GM12878 (cell line): ENCODE measurements at regions of chr17 and their contacts with region 1.

Region 1: DNA sequence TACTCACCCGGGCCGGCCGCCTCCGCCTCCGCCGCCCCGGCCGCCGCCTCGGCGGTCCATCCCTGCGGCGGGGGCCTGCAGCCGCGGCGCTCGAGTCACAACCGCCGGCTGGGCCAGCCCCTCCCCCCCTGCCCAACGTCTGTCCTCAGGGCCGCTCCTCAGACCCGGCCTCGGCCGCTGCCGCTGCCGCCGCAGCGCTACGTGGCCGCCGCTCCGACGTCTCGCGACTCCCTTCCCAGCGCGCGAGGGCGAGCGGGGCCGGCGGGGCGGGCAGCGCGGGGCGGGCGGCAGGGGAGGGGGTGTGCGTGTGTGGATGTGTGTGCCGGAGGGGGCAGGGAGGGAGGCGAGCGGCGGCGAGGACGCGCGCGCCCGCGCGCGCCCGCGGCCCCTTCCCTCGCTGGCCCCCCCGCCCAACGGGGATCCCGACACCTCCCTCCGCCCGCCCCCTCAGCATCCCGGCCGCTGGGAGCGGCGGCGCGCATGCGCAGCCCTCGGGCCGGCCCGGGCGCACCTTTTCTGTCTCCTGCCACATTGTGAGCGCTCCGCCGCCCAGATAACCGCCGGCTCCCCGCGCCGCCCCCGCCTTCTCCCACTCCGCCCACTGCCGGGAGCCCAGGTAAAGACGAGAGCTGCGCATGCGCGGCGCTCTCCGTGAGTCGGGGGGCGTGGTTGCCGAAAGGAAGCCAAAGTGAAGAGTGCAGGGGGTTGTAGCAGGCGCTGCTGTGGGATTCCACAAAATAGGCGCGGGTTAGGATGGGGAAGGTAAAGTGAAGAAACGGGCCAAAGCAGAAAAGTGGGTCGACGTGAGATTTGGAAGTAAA is at the start of gene ZNF652:
- DNase-seq: peak; percentile 65
- ATAC-seq: peak; percentile 69
- H3K4me3 ChIP-seq: peak within 1 kb of the TSS; percentile 95
- H3K27ac ChIP-seq: peak within 1 kb of the TSS; percentile 81
- H3K4me1 ChIP-seq: peaks cover 20% of the 10 kb centered on the region
- H3K27me3 ChIP-seq: no peaks in the 10 kb centered on the region
- CTCF ChIP-seq: no peak
- EP300 ChIP-seq: no peak
- POLR2A ChIP-seq: peak; percentile 71
- RAD21 ChIP-seq: no peak
- polyA plus RNA-seq, gene ZNF652: 3.5 to 5.4 TPM

Region 2: GRCh38 chr17:49292901-49293300 is 69.2 kb before region 1 on chr17:
- CTCF ChIA-PET with region 1: no interaction called
- POLR2A ChIA-PET with region 1: no interaction called
- RAD21 ChIA-PET with region 1: no interaction called
- SMC1A ChIA-PET with region 1: no interaction called
- in situ Hi-C with region 1: no loop called
- intact Hi-C with region 1: no loop called
- DNase-seq: no peak
- ATAC-seq: no peak
- H3K4me3 ChIP-seq: no peak overlapping the region
- H3K27ac ChIP-seq: no peak overlapping the region
- H3K4me1 ChIP-seq: no peaks in the 10 kb centered on the region
- H3K27me3 ChIP-seq: no peaks in the 10 kb centered on the region
- CTCF ChIP-seq: no peak
- EP300 ChIP-seq: no peak
- POLR2A ChIP-seq: no peak
- RAD21 ChIP-seq: no peak

Region 3: DNA sequence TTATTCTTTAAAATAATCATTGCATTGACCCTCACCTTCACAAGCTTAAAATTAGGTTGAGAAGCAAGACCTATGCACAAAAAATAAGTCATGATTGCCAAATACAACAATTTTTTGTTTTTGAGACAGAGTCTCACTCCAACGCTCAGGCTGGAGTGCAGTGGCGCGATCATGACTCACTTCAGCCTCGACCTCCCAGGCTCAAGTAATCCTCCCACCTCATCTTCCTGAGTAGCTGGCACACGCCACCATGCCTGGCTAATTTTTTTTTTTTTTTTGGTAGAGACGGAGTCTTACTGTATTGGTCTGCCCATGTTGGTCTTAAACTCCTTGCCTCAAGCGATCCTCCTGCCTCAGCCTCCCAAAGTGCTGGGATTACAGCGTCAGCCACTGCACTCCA is 24.2 kb before region 1 on chr17:
- CTCF ChIA-PET with region 1: interaction called, 24 read pairs
- POLR2A ChIA-PET with region 1: interaction called, 11 read pairs
- RAD21 ChIA-PET with region 1: interaction called, 27 read pairs
- SMC1A ChIA-PET with region 1: interaction called, 78 read pairs
- in situ Hi-C with region 1: no loop called
- intact Hi-C with region 1: loop called (anchors 2 kb)
- DNase-seq: no peak
- ATAC-seq: no peak
- H3K4me3 ChIP-seq: no peak overlapping the region
- H3K27ac ChIP-seq: no peak overlapping the region
- H3K4me1 ChIP-seq: peaks cover 16% of the 10 kb centered on the region
- H3K27me3 ChIP-seq: no peaks in the 10 kb centered on the region
- CTCF ChIP-seq: no peak
- EP300 ChIP-seq: no peak
- POLR2A ChIP-seq: no peak
- RAD21 ChIP-seq: no peak

Region 4: DNA sequence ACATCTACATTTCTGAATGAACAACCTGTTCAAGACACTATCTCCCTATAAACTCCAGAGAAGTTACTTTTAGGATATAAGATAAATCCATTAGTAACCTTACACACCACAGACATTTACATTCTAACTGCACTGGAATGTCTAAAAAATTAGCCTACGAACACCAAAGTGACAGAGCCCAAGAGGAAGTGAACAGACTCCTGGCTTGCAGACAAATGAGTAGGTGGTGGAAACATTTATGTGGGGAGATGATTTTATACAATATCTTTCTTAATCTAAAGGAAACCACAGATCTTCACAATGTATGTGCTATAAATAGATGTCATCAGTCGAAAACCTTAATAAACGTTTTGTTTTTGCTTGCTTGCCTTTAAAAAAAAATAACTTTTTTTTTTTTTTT is 18.8 kb before region 1 on chr17:
- CTCF ChIA-PET with region 1: interaction called, 24 read pairs
- POLR2A ChIA-PET with region 1: interaction called, 11 read pairs
- RAD21 ChIA-PET with region 1: interaction called, 27 read pairs
- SMC1A ChIA-PET with region 1: interaction called, 78 read pairs
- in situ Hi-C with region 1: no loop called
- intact Hi-C with region 1: loop called (anchors 2 kb)
- DNase-seq: no peak
- ATAC-seq: peak; percentile 28
- H3K4me3 ChIP-seq: no peak overlapping the region
- H3K27ac ChIP-seq: peak overlapping the region; percentile 47
- H3K4me1 ChIP-seq: peaks cover 32% of the 10 kb centered on the region
- H3K27me3 ChIP-seq: no peaks in the 10 kb centered on the region
- CTCF ChIP-seq: no peak
- EP300 ChIP-seq: no peak
- POLR2A ChIP-seq: no peak
- RAD21 ChIP-seq: no peak

Region 5: DNA sequence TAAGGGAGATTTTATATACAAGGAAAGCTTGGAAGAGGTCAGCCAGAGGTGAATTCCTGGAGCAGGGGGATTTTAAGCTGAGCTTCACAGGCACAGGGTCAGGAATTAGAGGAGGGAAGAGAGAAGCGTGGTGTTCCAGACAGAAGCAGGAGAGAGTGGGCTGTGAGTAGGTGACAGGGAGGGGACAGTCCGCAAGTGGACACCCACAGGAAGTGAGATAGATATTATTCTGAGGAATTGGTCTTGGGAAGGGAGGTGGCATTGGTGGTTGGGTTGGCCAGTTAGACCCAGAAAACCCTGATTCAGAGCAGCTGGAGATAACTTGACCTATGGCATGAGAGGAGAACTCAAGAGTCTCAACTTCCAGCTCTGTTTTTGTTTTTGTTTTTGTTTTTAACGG is 37.9 kb after region 1 on chr17:
- CTCF ChIA-PET with region 1: interaction called, 3 read pairs
- POLR2A ChIA-PET with region 1: interaction called, 4 read pairs
- RAD21 ChIA-PET with region 1: no interaction called
- SMC1A ChIA-PET with region 1: no interaction called
- in situ Hi-C with region 1: no loop called
- intact Hi-C with region 1: loop called (anchors 5 kb)
- DNase-seq: no peak
- ATAC-seq: no peak
- H3K4me3 ChIP-seq: no peak overlapping the region
- H3K27ac ChIP-seq: no peak overlapping the region
- H3K4me1 ChIP-seq: peaks cover 6% of the 10 kb centered on the region
- H3K27me3 ChIP-seq: no peaks in the 10 kb centered on the region
- CTCF ChIP-seq: no peak
- EP300 ChIP-seq: no peak
- POLR2A ChIP-seq: no peak
- RAD21 ChIP-seq: no peak

Region 6: GRCh38 chr17:49523706-49524472 is 161.8 kb after region 1 on chr17:
- CTCF ChIA-PET with region 1: no interaction called
- POLR2A ChIA-PET with region 1: no interaction called
- RAD21 ChIA-PET with region 1: no interaction called
- SMC1A ChIA-PET with region 1: no interaction called
- in situ Hi-C with region 1: no loop called
- intact Hi-C with region 1: no loop called
- DNase-seq: no peak
- ATAC-seq: no peak; the same call in 2 of the 3 replicates
- H3K4me3 ChIP-seq: no peak overlapping the region
- H3K27ac ChIP-seq: no peak overlapping the region
- H3K4me1 ChIP-seq: no peaks in the 10 kb centered on the region
- H3K27me3 ChIP-seq: no peaks in the 10 kb centered on the region
- CTCF ChIP-seq: no peak
- EP300 ChIP-seq: no peak
- POLR2A ChIP-seq: no peak
- RAD21 ChIP-seq: no peak